Prostate gland (tissue), 2 donors: ENCODE measurements at regions of chr7 and their contacts with region 1.

Region 1: GRCh38 chr7:104848138-104848990 is 165.6 kb upstream of the KMT2E start:
- DNase-seq: peak; percentile 48
- H3K4me3 ChIP-seq: no peak overlapping the region
- H3K27ac ChIP-seq: no peak overlapping the region
- H3K4me1 ChIP-seq: no peaks in the 10 kb centered on the region
- H3K27me3 ChIP-seq: no peaks in the 10 kb centered on the region
- CTCF ChIP-seq: peak; percentile 65 to 83 (median 75)
- POLR2A ChIP-seq: no peak

Region 2: DNA sequence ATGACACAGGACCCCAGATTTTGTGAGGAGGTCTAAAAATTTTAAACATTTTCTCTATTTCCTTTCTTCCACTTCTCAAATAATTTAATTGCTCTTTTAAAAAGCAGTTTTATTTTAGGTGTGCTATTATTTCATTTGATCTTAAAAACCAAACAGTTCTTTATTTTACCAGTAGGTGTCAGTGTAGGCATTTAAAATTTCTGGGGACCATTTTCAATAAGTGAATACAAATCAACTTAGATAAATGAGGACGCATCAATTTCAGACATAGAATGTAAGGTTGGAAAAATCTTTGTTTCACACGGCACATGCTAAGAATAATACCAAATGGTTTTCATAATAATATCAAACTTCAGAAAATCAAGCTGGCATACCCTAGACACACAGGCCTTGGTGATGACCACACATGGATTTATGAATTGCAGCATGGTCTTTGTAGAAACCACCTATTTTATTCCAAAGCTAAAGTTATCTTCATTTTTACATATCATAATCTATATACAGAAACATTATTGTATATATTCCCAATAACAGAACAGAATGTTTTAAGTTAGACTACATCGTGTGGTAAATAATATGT is 1274.8 kb before region 1 on chr7:
- intact Hi-C with region 1: loop called (anchors 10 kb)
- DNase-seq: no peak
- H3K4me3 ChIP-seq: no peak overlapping the region
- H3K27ac ChIP-seq: no peak overlapping the region
- H3K4me1 ChIP-seq: no peaks in the 10 kb centered on the region
- H3K27me3 ChIP-seq: no peaks in the 10 kb centered on the region
- CTCF ChIP-seq: peak; percentile 33 to 72 (median 60)
- POLR2A ChIP-seq: no peak

Region 3: DNA sequence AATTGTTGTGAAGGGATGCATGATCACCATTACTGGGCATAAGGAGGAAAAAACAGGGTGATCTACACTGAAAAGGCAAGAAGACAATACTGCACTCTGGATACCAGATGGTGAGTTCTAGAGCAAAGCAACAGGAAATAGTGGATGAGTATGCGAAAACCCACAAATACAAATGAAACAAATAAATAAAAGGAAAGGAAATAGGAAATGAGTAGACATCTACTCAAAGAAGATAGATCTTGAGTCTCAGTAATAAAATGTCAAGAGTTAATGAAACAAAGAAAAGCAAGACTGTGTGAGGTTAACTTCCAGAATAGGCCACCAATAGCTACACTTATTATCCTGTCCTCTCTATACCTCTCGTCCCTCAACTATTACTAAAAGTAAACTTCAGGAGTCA is 652.2 kb before region 1 on chr7:
- intact Hi-C with region 1: no loop called
- DNase-seq: no peak
- H3K4me3 ChIP-seq: no peak overlapping the region
- H3K27ac ChIP-seq: no peak overlapping the region
- H3K4me1 ChIP-seq: no peaks in the 10 kb centered on the region
- H3K27me3 ChIP-seq: no peaks in the 10 kb centered on the region
- CTCF ChIP-seq: no peak
- POLR2A ChIP-seq: no peak

Region 4: GRCh38 chr7:104231054-104232046 is 617.0 kb before region 1 on chr7:
- intact Hi-C with region 1: loop called (anchors 5 kb)
- DNase-seq: peak; percentile 25
- H3K4me3 ChIP-seq: no peak overlapping the region
- H3K27ac ChIP-seq: no peak overlapping the region
- H3K4me1 ChIP-seq: no peaks in the 10 kb centered on the region
- H3K27me3 ChIP-seq: no peaks in the 10 kb centered on the region
- CTCF ChIP-seq: peak; percentile 18 to 58 (median 55)
- POLR2A ChIP-seq: no peak

Region 5: GRCh38 chr7:104627516-104627915 is 220.8 kb before region 1 on chr7:
- intact Hi-C with region 1: no loop called
- DNase-seq: no peak
- H3K4me3 ChIP-seq: no peak overlapping the region
- H3K27ac ChIP-seq: no peak overlapping the region
- H3K4me1 ChIP-seq: no peaks in the 10 kb centered on the region
- H3K27me3 ChIP-seq: no peaks in the 10 kb centered on the region
- CTCF ChIP-seq: no peak
- POLR2A ChIP-seq: no peak

Region 6: GRCh38 chr7:104941281-104941741 is 92.9 kb after region 1 on chr7:
- intact Hi-C with region 1: no loop called
- DNase-seq: no peak
- H3K4me3 ChIP-seq: no peak overlapping the region
- H3K27ac ChIP-seq: no peak overlapping the region
- H3K4me1 ChIP-seq: peaks cover 4% of the 10 kb centered on the region
- H3K27me3 ChIP-seq: no peaks in the 10 kb centered on the region
- CTCF ChIP-seq: no peak
- POLR2A ChIP-seq: no peak